ENCODE measurements at regions of chr18 and their contacts with region 1.

Region 1: GRCh38 chr18:49768051-49768391 is 45.3 kb downstream of the ACAA2 start:
- DNase-seq: peak in 35 of 42 donors; percentile 18 to 68 (median 33)

Region 2: GRCh38 chr18:49704334-49704733 is 63.7 kb before region 1 on chr18:
- intact Hi-C with region 1: loop called (anchors 10 kb)
- DNase-seq: no peak

Region 3: DNA sequence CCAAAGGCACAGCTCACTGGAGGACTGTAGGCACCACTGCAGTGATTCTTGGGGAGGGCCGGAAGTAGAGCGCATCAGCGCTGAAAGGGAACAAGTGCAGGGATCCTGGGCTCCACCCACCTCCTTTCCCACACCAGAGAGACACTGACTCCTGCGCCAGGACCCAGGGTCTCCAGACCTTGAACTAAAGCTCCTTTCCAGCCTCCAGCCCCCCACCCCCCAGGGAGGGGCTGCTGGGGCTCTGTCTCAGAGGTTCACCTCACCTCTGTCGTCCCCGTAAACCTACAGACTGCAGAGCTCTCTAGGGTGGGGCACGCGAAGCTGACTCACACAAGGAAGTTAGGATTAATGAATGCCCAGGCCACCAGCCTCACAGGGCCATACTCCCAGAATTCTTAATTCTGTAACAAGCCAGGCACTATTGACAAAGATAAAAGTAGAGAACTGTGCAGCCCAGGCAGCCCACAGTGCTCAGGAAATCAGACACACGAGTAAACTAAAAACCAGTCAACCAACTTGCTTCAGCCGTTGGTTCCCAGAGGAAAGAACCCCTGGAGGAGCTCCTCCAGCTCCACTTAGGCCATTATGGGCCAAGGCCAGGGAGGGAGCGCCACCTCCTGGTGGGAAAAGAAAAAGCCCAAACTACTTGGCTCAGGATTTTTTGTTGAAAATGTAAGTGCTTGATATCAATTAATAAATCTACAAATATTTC is 90.4 kb after region 1 on chr18:
- intact Hi-C with region 1: no loop called
- DNase-seq: peak in 41 of 42 donors; percentile 36 to 89 (median 73)

Region 4: DNA sequence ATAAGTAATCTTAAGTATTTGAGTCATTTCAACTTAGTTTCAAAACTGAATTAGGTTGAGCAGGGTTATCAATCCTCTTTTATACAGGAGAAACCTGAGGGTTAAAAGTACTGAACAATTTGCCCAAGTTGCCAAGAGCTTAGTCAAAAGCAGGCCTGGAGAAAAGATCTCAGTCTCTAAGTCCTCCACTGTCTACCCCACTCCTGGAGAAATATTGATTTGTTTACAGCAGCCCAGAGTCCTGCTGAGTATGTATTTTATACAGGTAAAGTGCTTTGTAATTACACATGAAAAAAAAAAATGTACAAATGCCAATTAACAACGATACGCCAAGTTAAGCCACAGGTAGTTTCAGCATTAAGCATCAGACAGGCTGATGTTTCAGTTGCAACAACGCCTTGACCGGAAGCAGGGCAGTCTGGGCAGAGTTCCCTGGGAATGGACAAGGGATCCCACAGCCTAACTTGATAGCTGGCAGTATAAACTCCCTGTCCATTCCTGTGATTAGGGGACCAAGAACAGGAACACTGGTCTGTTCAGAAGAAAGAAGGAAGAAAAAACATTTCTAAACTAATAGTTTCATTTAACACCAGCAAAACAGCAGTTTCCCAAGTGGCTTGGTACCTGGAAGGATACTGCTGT is 294.0 kb after region 1 on chr18:
- intact Hi-C with region 1: no loop called
- DNase-seq: no peak